ENCODE measurements at regions of chr17 and their contacts with region 1.

Region 1: GRCh38 chr17:68539548-68540467 is 27.6 kb downstream of the PRKAR1A start:
- DNase-seq: peak in 1 of 3 donors; percentile 46
- ATAC-seq: peak in 1 of 2 donors; percentile 7
- H3K4me3 ChIP-seq: no peak overlapping the region
- H3K27ac ChIP-seq: peak overlapping the region; percentile 28
- H3K4me1 ChIP-seq: no peaks in the 10 kb centered on the region
- H3K27me3 ChIP-seq: no peaks in the 10 kb centered on the region

Region 2: DNA sequence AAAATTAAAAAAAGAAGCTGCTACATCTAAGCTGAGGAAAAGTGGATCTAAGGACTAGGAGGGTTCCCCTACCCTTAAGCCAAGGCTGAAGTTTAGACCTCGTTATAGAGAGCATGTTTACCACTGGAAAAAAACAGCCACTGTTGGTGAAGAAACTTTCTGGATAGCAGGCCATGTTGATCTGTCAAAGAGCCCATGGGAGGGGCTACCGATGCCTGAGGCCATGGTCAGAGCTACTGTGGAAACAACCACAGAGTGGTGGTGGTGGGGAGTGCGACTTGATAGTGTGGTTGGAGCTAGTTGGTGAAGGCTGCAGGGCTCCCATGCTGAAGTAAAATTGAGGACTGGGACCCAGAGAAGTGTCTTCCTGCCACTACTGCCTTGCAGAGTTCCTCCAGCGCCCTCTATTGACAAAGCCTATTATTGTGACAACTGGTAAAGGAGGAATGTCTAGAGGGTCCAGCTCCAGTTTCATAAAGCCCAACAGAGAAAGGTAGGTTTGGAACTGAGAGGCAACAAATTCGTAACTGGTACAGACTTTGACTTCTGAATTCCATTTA is 74.0 kb after region 1 on chr17:
- intact Hi-C with region 1: loop called in 1 of 4 experiments (anchors 10 kb)
- DNase-seq: peak in 2 of 3 donors; percentile 28 to 29
- ATAC-seq: peak; percentile 36 to 85
- H3K4me3 ChIP-seq: no peak overlapping the region
- H3K27ac ChIP-seq: no peak overlapping the region
- H3K4me1 ChIP-seq: no peaks in the 10 kb centered on the region
- H3K27me3 ChIP-seq: no peaks in the 10 kb centered on the region

Region 3: DNA sequence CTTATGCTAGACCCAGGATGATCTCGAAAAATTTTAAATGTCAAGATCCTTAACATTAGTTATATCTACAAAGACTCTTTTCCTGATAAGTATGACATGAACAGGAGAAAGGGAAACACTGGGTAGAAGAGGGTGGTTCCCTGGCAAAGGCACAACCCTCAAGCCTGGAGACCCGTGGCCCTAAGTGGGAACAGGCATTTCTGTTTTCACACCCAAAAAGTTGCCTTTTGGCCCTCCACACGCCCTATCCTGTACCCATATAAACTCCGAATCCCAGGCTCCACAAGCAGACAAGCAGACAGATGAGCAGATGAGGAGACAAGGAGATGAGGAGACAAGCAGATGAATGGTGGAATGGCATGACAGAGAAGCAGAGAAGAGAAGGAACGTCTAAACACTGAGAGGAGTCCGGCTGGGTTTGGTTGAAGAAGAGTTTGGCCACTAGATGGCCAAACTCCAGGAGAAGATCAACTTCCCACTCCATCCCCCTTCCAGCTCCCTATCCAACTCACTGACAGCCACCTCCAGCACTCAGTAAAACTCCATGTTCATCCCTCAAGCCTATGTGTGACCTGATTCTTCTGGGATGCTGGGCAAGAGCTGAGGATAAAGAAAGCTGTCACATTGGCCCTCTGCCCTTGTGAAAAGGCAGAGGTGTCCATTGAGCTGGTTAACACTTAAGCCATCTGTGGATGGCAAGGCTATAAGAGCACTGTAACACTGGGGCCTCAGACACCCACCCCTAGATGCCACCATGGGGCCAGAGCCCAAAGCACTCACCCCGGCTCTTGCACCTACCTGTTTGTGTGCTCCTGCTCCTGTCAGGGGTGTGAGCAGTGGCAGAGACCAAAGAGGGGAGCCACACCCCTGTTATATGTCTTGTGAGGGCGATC is 201.0 kb after region 1 on chr17:
- intact Hi-C with region 1: no loop called
- DNase-seq: no peak
- ATAC-seq: no peak
- H3K4me3 ChIP-seq: no peak overlapping the region
- H3K27ac ChIP-seq: no peak overlapping the region
- H3K4me1 ChIP-seq: no peaks in the 10 kb centered on the region
- H3K27me3 ChIP-seq: no peaks in the 10 kb centered on the region

Region 4: DNA sequence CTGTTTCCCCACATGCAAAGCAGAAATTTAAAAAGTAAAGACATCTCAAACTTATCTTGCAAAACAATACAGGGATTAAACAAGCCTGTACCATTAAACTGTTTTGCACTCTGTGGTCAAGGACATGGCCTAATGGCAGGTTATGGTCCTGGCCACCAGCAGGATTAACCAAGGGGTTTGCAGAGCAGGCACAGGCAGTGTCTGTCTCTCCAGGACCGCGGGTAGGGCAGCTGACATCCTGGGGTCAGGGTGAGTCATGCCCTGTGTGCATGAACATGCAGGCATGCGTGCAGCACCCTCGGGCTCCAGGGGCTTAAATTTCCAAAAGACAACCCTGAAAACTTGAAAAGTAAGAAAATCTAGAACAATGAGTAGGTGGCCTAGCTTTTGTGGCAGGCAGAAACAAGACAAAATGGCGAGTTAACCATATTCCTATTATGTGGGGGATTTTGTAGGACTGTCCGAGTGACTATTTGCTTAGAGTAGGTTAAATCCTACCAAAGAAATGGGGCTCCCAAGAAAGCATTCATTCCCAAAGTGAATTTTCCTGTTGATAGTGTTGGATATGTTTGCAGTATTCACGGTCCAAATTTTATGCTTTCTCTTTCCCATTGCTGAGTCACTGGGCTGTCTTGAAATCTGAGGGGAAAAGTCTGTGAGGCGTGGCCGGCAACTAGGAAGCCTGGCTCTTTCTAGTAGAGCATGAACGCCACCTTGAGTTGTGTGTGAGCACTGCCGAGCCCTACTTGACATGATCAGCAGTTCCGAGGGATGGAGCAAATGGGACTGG is 219.7 kb after region 1 on chr17:
- intact Hi-C with region 1: loop called in 2 of 4 experiments (anchors 5 to 10 kb)
- DNase-seq: peak; percentile 88 to 96 (median 92)
- ATAC-seq: peak; percentile 98
- H3K4me3 ChIP-seq: peak overlapping the region; percentile 39
- H3K27ac ChIP-seq: peak overlapping the region; percentile 6
- H3K4me1 ChIP-seq: peaks cover 2% of the 10 kb centered on the region
- H3K27me3 ChIP-seq: no peaks in the 10 kb centered on the region